ENCODE measurements at regions of chr19 and their contacts with region 1.

Region 1: GRCh38 chr19:44752816-44753618 is 4.5 kb downstream of the BCL3 start:
- DNase-seq: peak; percentile 98
- ATAC-seq: peak; percentile 78
- H3K4me3 Mint-ChIP-seq: peak overlapping the region; percentile 89
- H3K27ac Mint-ChIP-seq: peak overlapping the region; percentile 96
- H3K4me1 Mint-ChIP-seq: peaks cover 68% of the 10 kb centered on the region
- H3K27me3 Mint-ChIP-seq: no peaks in the 10 kb centered on the region

Region 2: DNA sequence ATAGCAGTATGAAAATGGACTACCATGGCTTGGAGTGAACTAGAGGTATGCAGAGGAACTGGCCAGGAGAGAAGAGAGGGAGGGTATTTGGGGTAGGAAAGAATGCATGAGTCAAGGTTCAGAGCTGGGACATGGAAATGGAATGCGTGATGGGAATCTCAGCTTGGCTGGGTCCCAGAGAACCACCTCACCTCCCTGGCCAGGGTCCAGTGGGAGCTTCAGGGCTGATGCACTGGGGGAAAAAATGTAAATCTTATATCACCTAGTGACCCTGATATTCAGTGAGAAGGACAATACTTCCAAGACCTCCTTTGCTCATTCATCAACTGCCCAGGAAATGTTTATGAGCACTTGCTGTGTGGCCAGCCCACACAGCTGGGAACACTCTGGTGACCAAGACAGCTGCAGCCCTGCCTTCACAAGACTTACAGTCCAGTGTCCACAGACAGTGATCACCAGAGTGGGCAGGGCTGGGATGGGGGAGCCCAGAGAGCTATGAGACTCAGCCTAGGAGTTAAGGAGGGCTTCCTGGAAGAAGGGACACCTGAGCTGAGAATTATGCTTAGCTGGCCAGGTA is 126.9 kb before region 1 on chr19:
- CTCF ChIA-PET with region 1: no interaction called
- POLR2A ChIA-PET with region 1: no interaction called
- DNase-seq: no peak
- ATAC-seq: no peak
- H3K4me3 Mint-ChIP-seq: no peak overlapping the region
- H3K27ac Mint-ChIP-seq: no peak overlapping the region
- H3K4me1 Mint-ChIP-seq: no peaks in the 10 kb centered on the region
- H3K27me3 Mint-ChIP-seq: no peaks in the 10 kb centered on the region

Region 3: DNA sequence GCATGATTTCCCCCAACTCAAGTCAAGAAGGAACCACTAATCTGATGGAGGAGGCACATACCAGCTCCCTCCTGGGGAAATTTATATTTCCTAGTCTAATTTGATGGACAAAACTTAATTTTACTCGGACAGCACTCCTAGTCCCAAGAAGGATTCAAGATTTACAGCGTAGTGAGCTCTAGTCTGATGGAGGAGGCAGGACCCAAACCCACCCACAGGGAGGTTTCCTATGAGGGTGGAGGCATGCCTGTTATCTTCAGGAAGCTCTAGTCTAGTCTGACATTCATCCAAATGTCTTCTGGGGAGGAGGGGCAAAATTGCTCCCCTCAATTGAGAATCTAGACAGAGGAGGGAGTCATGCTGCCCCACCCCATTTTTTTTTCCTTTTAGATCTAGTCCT is 14.9 kb before region 1 on chr19:
- CTCF ChIA-PET with region 1: no interaction called
- POLR2A ChIA-PET with region 1: no interaction called
- DNase-seq: no peak
- ATAC-seq: no peak
- H3K4me3 Mint-ChIP-seq: no peak overlapping the region
- H3K27ac Mint-ChIP-seq: no peak overlapping the region
- H3K4me1 Mint-ChIP-seq: peaks cover 26% of the 10 kb centered on the region
- H3K27me3 Mint-ChIP-seq: peaks cover 7% of the 10 kb centered on the region

Region 4: DNA sequence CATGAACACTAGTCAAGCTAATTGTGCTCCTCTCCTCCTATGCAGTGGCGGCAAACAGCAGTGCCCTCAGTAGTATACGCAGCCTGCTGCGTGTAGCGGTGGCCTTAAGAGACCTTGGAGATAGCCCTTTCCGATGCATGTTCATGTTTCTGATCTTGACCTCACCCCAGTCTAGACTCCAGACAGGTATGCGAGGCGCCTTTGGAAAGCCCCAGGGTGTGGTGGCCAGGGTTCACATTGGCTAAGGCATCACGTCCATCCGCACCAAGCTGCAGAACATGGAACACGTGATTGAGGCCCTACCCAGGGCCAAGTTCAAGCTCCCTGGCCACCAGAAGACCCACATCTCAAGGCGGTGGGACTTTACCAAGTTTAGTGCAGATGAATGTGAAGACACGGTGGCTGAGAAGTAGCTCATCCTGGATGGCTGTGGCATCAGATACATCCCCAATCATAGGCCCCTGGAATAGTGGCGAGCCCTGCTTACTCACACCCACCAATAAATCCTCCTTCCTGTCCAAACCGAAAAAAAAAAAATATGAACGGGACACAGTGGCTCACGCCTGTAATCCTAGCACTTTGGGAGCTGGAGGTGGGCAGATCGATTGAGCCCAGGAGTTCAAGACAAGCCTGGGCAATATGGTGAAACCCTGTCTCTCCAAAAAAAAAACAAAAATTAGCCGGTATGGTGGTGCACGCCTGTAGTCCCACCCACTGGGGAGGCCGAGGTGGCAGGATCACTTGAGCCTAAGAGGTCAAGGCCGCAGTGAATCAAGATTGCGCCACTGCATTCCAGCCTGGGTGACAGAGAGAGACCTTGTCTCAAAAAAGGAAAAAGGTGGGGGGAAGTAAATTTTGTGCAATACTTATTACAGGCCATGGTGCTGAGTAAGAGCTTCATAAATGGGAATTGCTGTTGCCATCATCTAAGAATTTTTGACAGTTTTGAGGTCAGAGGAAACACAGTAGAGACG is 12.2 kb after region 1 on chr19:
- CTCF ChIA-PET with region 1: interaction called, 56 read pairs
- POLR2A ChIA-PET with region 1: interaction called, 6 read pairs
- DNase-seq: no peak
- ATAC-seq: no peak
- H3K4me3 Mint-ChIP-seq: no peak overlapping the region
- H3K27ac Mint-ChIP-seq: no peak overlapping the region
- H3K4me1 Mint-ChIP-seq: peaks cover 61% of the 10 kb centered on the region
- H3K27me3 Mint-ChIP-seq: no peaks in the 10 kb centered on the region

Region 5: DNA sequence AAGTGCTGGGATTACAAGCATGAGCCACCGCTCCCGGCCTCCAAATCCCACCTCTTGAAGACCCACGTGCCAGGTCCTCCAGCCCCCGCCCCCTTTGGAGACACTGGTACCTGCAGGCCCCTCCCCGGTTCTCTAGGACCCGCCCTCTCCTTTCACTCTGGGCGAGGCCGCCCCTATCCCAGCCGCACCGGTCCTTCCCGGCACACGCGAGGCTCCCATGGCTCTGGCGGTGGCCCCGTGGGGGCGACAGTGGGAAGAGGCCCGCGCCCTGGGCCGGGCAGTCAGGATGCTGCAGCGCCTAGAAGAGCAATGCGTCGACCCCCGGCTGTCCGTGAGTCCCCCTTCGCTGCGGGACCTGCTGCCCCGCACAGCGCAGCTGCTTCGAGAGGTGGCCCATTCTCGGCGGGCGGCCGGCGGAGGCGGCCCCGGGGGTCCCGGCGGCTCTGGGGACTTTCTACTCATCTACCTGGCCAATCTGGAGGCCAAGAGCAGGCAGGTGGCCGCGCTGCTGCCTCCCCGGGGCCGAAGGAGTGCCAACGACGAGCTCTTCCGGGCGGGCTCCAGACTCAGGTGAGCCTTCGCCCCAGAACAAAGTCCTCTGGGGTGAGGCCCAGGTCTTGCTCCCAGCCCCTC is 24.8 kb after region 1 on chr19 and contains the start of gene CBLC:
- CTCF ChIA-PET with region 1: no interaction called
- POLR2A ChIA-PET with region 1: no interaction called
- DNase-seq: no peak
- ATAC-seq: no peak
- H3K4me3 Mint-ChIP-seq: no peak within 1 kb of the TSS
- H3K27ac Mint-ChIP-seq: no peak within 1 kb of the TSS
- H3K4me1 Mint-ChIP-seq: no peaks in the 10 kb centered on the region
- H3K27me3 Mint-ChIP-seq: peaks cover 9% of the 10 kb centered on the region
- total RNA-seq, gene CBLC: not detected

Region 6: GRCh38 chr19:44800461-44800860 is 47.4 kb after region 1 on chr19:
- CTCF ChIA-PET with region 1: no interaction called
- POLR2A ChIA-PET with region 1: no interaction called
- DNase-seq: peak; percentile 93
- ATAC-seq: peak; percentile 100
- H3K4me3 Mint-ChIP-seq: no peak overlapping the region
- H3K27ac Mint-ChIP-seq: no peak overlapping the region
- H3K4me1 Mint-ChIP-seq: peaks cover 27% of the 10 kb centered on the region
- H3K27me3 Mint-ChIP-seq: no peaks in the 10 kb centered on the region